Keratinocyte (primary cell): ENCODE measurements at regions of chr2 and their contacts with region 1.

Region 1: GRCh38 chr2:161946489-161947107 is 127.4 kb downstream of the DPP4 start:
- DNase-seq: no peak
- H3K4me3 ChIP-seq: no peak overlapping the region
- H3K27ac ChIP-seq: no peak overlapping the region
- H3K4me1 ChIP-seq: no peaks in the 10 kb centered on the region
- H3K27me3 ChIP-seq: no peaks in the 10 kb centered on the region
- CTCF ChIP-seq: peak in 2 of 3 experiments; percentile 22 to 39

Region 2: DNA sequence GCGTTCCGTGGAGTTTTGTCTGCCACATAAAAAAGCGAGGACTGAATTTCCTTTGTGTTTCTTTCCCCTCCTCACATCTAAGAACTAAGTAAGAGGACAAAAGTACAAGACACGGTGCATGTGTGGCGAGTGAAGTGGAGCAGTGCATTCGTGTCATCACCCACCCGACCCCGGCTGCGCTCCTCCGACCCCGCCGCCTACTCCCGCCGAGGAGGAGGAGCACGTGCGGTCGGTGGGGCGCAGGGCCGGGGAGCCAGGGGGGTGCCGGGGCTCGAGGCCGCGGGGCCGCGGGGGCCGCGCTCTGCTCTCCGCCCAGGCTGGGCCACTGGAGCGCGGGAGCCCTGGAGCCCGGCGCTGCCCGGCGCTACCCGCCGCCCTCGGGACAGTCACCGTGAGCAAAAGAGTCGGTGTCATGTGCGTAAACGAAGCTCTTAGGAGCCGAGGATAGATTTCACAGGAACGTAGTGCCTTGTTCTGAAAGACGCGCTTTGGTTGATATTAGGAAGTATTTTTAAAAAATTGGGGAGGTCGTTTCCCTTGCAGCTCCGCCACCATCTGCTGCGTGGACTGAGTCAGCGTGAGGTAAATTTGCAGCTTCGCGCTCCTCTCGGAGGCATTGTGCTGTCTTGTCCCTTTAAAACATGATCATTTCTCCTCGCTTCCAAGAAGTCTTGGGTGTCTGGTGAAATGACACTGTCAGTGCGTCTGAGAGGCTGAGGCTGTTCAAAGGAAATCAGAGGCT is 519.5 kb before region 1 on chr2:
- dilution Hi-C with region 1: loop called (anchors 25 kb)
- DNase-seq: no peak
- H3K4me3 ChIP-seq: peak overlapping the region in 1 of 3 experiments; percentile 15
- H3K27ac ChIP-seq: no peak overlapping the region
- H3K4me1 ChIP-seq: peaks cover 4% of the 10 kb centered on the region
- H3K27me3 ChIP-seq: peaks cover 86% of the 10 kb centered on the region
- CTCF ChIP-seq: peak in 2 of 3 experiments; percentile 2 to 43

Region 3: DNA sequence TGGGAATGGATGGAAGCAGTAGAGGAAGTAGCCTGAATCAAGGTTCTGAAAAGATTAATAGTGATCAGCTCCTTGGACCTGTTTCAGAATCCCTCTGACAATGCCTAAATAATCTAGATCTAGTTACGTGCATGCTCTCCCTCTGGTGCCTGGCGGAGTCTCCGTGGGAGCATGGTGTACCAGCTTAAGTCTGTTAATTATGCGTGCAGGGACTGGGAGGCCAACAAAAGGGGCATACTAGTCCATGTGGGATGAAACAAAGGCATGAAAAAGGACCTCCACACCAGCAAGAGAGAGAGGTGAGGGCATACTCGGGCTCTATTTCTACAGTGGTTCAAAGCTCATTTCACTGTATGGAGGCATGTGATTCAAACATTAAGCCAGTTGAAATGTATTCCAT is 72.9 kb before region 1 on chr2:
- dilution Hi-C with region 1: no loop called
- DNase-seq: no peak
- H3K4me3 ChIP-seq: no peak overlapping the region
- H3K27ac ChIP-seq: no peak overlapping the region
- H3K4me1 ChIP-seq: no peaks in the 10 kb centered on the region
- H3K27me3 ChIP-seq: no peaks in the 10 kb centered on the region
- CTCF ChIP-seq: no peak